ENCODE measurements at regions of chr10 and their contacts with region 1.

Region 1: GRCh38 chr10:97572214-97572989 is at the start of gene ANKRD2:
- DNase-seq: peak; percentile 47 to 65 (median 47)
- H3K4me3 ChIP-seq: no peak within 1 kb of the TSS
- H3K4me3 Mint-ChIP-seq: no peak within 1 kb of the TSS
- H3K27ac ChIP-seq: no peak within 1 kb of the TSS
- H3K27ac Mint-ChIP-seq: peak within 1 kb of the TSS in 2 of 7 donors; percentile 26 to 66
- H3K4me1 ChIP-seq: no peaks in the 10 kb centered on the region
- H3K4me1 Mint-ChIP-seq: no peaks in the 10 kb centered on the region
- H3K27me3 ChIP-seq: no peaks in the 10 kb centered on the region
- H3K27me3 Mint-ChIP-seq: peaks cover 0 to 3% (median under 1%) of the 10 kb centered on the region in 3 donors
- CTCF ChIP-seq: peak; percentile 83
- polyA plus RNA-seq, gene ANKRD2: not detected

Region 2: DNA sequence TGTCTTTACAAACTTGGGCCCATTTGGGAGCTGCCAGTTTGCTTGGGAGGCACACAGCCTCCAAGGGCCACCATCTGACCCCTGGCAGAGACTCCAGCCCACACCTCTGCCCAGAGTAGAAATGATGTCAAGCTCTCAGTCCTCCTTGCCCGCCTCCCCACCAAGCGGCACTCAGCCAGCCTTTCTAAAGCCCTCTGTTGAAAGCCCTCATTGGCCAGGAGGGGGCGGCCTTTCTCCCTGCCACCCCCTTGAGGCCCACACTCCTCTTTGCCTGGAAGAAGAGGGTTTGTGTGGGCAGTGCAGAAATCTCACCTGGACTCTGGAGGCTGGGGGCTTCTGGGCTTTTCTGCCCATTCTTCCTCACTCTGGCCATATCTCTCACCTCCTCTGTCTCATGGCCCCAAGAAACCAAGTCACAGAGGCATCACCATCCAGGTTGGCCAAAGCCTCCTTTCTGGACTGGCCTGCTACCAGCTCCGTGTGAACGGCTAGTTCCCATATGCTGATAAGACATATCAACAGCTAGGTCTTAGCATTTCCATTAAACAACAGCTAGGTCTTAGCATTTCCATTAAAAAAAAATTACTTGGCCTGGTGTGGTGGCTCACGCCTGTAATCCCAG is 37.5 kb before region 1 on chr10:
- intact Hi-C with region 1: no loop called
- DNase-seq: peak; percentile 21 to 45 (median 42)
- H3K4me3 ChIP-seq: no peak overlapping the region
- H3K4me3 Mint-ChIP-seq: no peak overlapping the region
- H3K27ac ChIP-seq: no peak overlapping the region
- H3K27ac Mint-ChIP-seq: peak overlapping the region in 2 of 7 donors; percentile 6 to 37
- H3K4me1 ChIP-seq: no peaks in the 10 kb centered on the region
- H3K4me1 Mint-ChIP-seq: peaks cover 1% of the 10 kb centered on the region
- H3K27me3 ChIP-seq: no peaks in the 10 kb centered on the region
- H3K27me3 Mint-ChIP-seq: no peaks in the 10 kb centered on the region
- CTCF ChIP-seq: peak; percentile 70

Region 3: GRCh38 chr10:97664282-97664850 is 92.0 kb after region 1 on chr10:
- intact Hi-C with region 1: loop called in 1 of 2 experiments (anchors 10 kb)
- DNase-seq: no peak
- H3K4me3 ChIP-seq: no peak overlapping the region
- H3K4me3 Mint-ChIP-seq: no peak overlapping the region
- H3K27ac ChIP-seq: no peak overlapping the region
- H3K27ac Mint-ChIP-seq: peak overlapping the region in 1 of 7 donors; percentile 46
- H3K4me1 ChIP-seq: no peaks in the 10 kb centered on the region
- H3K4me1 Mint-ChIP-seq: no peaks in the 10 kb centered on the region
- H3K27me3 ChIP-seq: no peaks in the 10 kb centered on the region
- H3K27me3 Mint-ChIP-seq: no peaks in the 10 kb centered on the region
- CTCF ChIP-seq: no peak

Region 4: GRCh38 chr10:97736902-97737769 is 164.7 kb after region 1 on chr10 and contains the start of gene ZFYVE27:
- intact Hi-C with region 1: loop called in 1 of 2 experiments (anchors 10 kb)
- DNase-seq: peak; percentile 92 to 94 (median 93)
- H3K4me3 ChIP-seq: peak within 1 kb of the TSS; percentile 58 to 93 (median 89)
- H3K4me3 Mint-ChIP-seq: peak within 1 kb of the TSS; percentile 85 to 98
- H3K27ac ChIP-seq: peak within 1 kb of the TSS; percentile 79 to 89
- H3K27ac Mint-ChIP-seq: peak within 1 kb of the TSS; percentile 88 to 97 (median 94)
- H3K4me1 ChIP-seq: peaks cover 16 to 21% of the 10 kb centered on the region in 2 donors
- H3K4me1 Mint-ChIP-seq: peaks cover 29% of the 10 kb centered on the region
- H3K27me3 ChIP-seq: no peaks in the 10 kb centered on the region
- H3K27me3 Mint-ChIP-seq: peaks cover 0 to 3% (median 0%) of the 10 kb centered on the region in 3 donors
- CTCF ChIP-seq: no peak
- polyA plus RNA-seq, gene ZFYVE27: 6.2 to 31.1 (median 9.7) TPM